ENCODE measurements at regions of chr19 and their contacts with region 1.

Region 1: GRCh38 chr19:13880059-13881043 is 3.4 kb downstream of the NANOS3 start:
- DNase-seq: peak; percentile 93 to 96
- H3K4me3 ChIP-seq: peak overlapping the region; percentile 14
- H3K4me3 Mint-ChIP-seq: peak overlapping the region; percentile 24
- H3K27ac Mint-ChIP-seq: peak overlapping the region; percentile 48
- H3K4me1 ChIP-seq: peaks cover 13% of the 10 kb centered on the region
- H3K4me1 Mint-ChIP-seq: peaks cover 7% of the 10 kb centered on the region
- H3K27me3 ChIP-seq: no peaks in the 10 kb centered on the region
- H3K27me3 Mint-ChIP-seq: no peaks in the 10 kb centered on the region
- CTCF ChIP-seq: peak; percentile 93 to 96

Region 2: GRCh38 chr19:13817615-13818371 is 62.6 kb before region 1 on chr19:
- CTCF ChIA-PET with region 1: no interaction called
- POLR2A ChIA-PET with region 1: no interaction called
- intact Hi-C with region 1: no loop called
- DNase-seq: peak; percentile 87 to 90
- H3K4me3 ChIP-seq: peak overlapping the region; percentile 70
- H3K4me3 Mint-ChIP-seq: peak overlapping the region; percentile 76
- H3K27ac Mint-ChIP-seq: peak overlapping the region; percentile 45
- H3K4me1 ChIP-seq: no peaks in the 10 kb centered on the region
- H3K4me1 Mint-ChIP-seq: no peaks in the 10 kb centered on the region
- H3K27me3 ChIP-seq: no peaks in the 10 kb centered on the region
- H3K27me3 Mint-ChIP-seq: no peaks in the 10 kb centered on the region
- CTCF ChIP-seq: no peak

Region 3: DNA sequence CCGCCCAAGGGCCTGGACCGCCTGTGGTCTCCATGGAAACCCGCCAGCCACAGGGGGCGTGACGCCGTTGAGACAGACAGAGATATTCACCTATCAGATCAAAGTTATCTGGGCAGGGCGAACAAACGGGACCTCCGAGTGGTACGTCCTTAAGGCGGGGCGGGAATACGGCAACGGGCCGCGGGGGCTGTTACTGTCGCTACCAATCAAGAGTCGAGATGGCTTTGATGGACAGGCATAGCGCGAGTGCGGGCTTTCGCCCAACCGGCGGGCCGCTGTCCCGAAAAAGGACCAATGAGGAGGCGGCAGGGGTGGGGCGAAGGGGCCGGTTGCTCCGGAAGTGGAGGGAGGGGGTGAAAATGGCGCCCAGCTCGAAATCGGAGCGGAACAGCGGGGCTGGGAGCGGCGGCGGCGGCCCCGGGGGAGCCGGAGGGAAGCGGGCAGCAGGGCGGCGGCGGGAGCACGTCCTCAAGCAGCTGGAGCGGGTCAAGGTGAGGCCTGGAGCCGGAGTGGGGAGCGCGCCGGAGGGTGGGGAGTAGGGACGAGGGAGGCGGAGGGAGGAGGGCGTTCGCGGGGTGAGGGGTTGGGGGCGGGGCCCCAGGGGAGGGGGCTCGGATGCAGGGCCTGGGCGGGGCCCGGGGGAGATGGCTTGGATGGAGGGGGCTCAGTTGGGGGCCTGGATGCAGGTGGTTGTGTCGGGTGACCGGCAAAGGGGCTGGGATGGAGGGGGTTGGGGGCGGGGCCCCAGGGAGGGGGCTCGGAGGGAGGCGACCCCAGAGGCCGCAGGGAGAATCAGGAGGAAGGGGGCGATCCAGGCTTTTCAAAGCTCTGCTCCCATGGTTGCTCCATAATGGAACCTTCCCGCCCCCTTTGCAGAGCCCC is 72.0 kb after region 1 on chr19 and contains the start of gene DCAF15:
- CTCF ChIA-PET with region 1: no interaction called
- POLR2A ChIA-PET with region 1: no interaction called
- intact Hi-C with region 1: loop called (anchors 2 kb)
- DNase-seq: peak; percentile 99
- H3K4me3 ChIP-seq: peak within 1 kb of the TSS; percentile 90
- H3K4me3 Mint-ChIP-seq: peak within 1 kb of the TSS; percentile 71
- H3K27ac Mint-ChIP-seq: peak within 1 kb of the TSS; percentile 81
- H3K4me1 ChIP-seq: 0 out of 2 replicates have a peak, but pooled peaks cover 6% of the 10 kb centered on the region
- H3K4me1 Mint-ChIP-seq: no peaks in the 10 kb centered on the region
- H3K27me3 ChIP-seq: no peaks in the 10 kb centered on the region
- H3K27me3 Mint-ChIP-seq: no peaks in the 10 kb centered on the region
- CTCF ChIP-seq: no peak
- total RNA-seq, gene DCAF15: 41.1 and 43.0 TPM in 2 replicates

Region 4: DNA sequence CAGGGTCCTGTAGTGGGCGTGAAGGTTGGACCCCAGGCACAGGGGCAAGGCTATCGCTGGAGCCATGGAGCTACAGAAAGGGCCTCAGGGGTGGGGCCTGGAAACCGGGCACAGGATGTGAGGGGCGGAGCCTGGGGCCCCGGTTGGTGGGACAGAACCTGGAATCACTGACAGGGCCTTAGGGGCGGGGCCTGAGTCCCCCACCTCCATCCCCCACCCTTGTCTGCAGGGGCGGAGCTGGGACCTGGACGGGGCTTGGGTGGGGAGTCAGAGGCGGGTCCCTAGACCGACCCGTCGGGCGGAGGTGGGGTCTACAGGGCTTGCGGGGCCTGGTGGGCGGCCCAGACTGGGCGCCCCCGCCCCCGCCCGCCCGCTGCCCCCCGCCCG is 98.0 kb after region 1 on chr19:
- CTCF ChIA-PET with region 1: no interaction called
- POLR2A ChIA-PET with region 1: no interaction called
- intact Hi-C with region 1: loop called (anchors 1 kb)
- DNase-seq: peak; percentile 85 to 89
- H3K4me3 ChIP-seq: peak overlapping the region; percentile 38
- H3K4me3 Mint-ChIP-seq: peak overlapping the region; percentile 65
- H3K27ac Mint-ChIP-seq: peak overlapping the region; percentile 35
- H3K4me1 ChIP-seq: peaks cover 19% of the 10 kb centered on the region
- H3K4me1 Mint-ChIP-seq: peaks cover 10% of the 10 kb centered on the region
- H3K27me3 ChIP-seq: no peaks in the 10 kb centered on the region
- H3K27me3 Mint-ChIP-seq: no peaks in the 10 kb centered on the region
- CTCF ChIP-seq: no peak

Region 5: DNA sequence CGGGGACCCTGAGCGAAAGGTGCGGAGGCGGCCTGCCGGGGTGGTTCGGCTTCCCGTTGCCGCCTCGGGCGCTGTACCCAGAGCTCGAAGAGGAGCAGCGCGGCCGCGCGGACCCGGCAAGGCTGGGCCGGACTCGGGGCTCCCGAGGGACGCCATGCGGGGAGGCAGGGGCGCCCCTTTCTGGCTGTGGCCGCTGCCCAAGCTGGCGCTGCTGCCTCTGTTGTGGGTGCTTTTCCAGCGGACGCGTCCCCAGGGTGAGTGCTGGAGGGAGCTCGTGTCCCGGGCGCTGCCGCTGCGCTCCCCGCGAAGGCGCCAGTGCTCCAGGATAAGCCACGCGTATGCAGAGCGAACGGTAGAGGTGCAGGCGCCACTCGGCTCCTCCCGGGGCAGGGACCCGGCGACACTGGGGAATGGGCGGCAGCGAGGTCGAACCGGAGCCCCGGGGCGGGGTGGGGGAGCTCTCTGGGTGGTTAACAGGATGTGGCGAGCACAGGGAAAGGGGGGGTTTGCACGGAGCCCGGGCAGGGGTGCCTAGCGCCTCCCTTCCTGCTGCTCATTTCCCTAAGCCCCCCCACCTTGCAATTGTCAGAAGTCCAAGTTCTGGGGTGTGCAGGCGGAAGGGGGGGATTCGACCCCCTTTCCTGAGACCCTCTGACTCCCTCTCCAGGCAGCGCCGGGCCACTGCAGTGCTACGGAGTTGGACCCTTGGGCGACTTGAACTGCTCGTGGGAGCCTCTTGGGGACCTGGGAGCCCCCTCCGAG is 151.5 kb after region 1 on chr19 and contains the start of gene IL27RA:
- CTCF ChIA-PET with region 1: interaction called, 3 read pairs
- POLR2A ChIA-PET with region 1: no interaction called
- intact Hi-C with region 1: loop called (anchors 2 kb)
- DNase-seq: peak; percentile 63 to 67
- H3K4me3 ChIP-seq: peak within 1 kb of the TSS; percentile 61
- H3K4me3 Mint-ChIP-seq: peak within 1 kb of the TSS; percentile 89
- H3K27ac Mint-ChIP-seq: peak within 1 kb of the TSS; percentile 55
- H3K4me1 ChIP-seq: no peaks in the 10 kb centered on the region
- H3K4me1 Mint-ChIP-seq: peaks cover 6% of the 10 kb centered on the region
- H3K27me3 ChIP-seq: no peaks in the 10 kb centered on the region
- H3K27me3 Mint-ChIP-seq: no peaks in the 10 kb centered on the region
- CTCF ChIP-seq: peak; percentile 69 to 77
- total RNA-seq, gene IL27RA: 4.7 and 5.6 TPM in 2 replicates

Region 6: DNA sequence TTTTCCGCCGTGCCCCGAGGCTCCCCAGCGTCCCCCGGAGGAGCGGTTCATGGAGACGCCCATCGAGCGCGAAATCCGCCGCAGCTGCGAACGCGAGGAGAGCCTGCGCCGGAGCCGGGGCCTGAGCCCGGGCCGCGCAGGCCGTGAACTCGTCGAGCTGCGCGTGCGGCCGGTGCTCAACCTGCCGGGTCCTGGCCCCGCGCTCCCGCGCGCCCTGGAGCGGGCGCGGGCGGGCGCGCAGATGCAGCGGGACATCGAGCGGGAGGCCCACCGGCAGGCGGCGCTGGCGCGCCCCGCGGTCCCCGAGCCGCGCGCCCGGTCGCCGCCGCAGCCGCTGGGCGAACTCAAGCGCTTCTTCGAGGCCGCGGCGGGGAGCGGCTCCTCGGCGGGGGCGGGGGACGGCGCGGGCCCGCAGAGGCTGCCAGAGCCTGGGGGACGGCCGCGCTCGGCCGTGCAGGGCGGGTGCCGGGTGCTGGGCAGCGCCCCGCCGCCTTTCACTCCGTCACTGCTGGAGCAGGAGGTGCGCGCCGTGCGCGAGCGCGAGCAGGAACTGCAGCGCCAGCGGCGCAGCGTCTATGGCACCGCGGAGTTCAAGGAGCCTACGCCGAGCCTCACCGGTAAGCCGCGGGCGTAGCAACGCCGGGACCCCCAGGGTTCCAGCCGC is 193.0 kb after region 1 on chr19:
- CTCF ChIA-PET with region 1: interaction called, 3 read pairs
- POLR2A ChIA-PET with region 1: no interaction called
- intact Hi-C with region 1: loop called (anchors 1 kb)
- DNase-seq: peak; percentile 54 to 85
- H3K4me3 ChIP-seq: peak overlapping the region; percentile 84
- H3K4me3 Mint-ChIP-seq: peak overlapping the region; percentile 100
- H3K27ac Mint-ChIP-seq: peak overlapping the region; percentile 97
- H3K4me1 ChIP-seq: no peaks in the 10 kb centered on the region
- H3K4me1 Mint-ChIP-seq: no peaks in the 10 kb centered on the region
- H3K27me3 ChIP-seq: no peaks in the 10 kb centered on the region
- H3K27me3 Mint-ChIP-seq: no peaks in the 10 kb centered on the region
- CTCF ChIP-seq: peak in 1 of 2 experiments; percentile 36